SK-N-SH (cell line): ENCODE measurements at regions of chr19 and their contacts with region 1.

Region 1: GRCh38 chr19:10027158-10027693 is 13.9 kb downstream of the RDH8 start:
- DNase-seq: no peak
- H3K4me3 ChIP-seq: peak overlapping the region in 1 of 2 experiments; percentile 30; a peak in 1 of 4 replicates
- H3K27ac ChIP-seq: no peak overlapping the region
- H3K4me1 ChIP-seq: peaks cover 0 to 4% of the 10 kb centered on the region in 2 experiments; a peak in 1 of 4 replicates
- H3K27me3 ChIP-seq: peaks cover 63% of the 10 kb centered on the region
- CTCF ChIP-seq: no peak
- EP300 ChIP-seq: no peak
- RAD21 ChIP-seq: no peak

Region 2: GRCh38 chr19:9934132-9934950 is 92.9 kb before region 1 on chr19:
- CTCF ChIA-PET with region 1: interaction called, 142 read pairs
- POLR2A ChIA-PET with region 1: no interaction called
- DNase-seq: peak; percentile 92
- H3K4me3 ChIP-seq: peak overlapping the region in 1 of 2 experiments; percentile 30; a peak in 2 of 4 replicates
- H3K27ac ChIP-seq: no peak overlapping the region
- H3K4me1 ChIP-seq: peaks cover 5 to 17% of the 10 kb centered on the region in 2 experiments; a peak in 3 of 4 replicates
- H3K27me3 ChIP-seq: peaks cover 23% of the 10 kb centered on the region; the same call in 1 of the 2 replicates
- CTCF ChIP-seq: peak; percentile 95
- EP300 ChIP-seq: no peak
- RAD21 ChIP-seq: peak; percentile 86

Region 3: DNA sequence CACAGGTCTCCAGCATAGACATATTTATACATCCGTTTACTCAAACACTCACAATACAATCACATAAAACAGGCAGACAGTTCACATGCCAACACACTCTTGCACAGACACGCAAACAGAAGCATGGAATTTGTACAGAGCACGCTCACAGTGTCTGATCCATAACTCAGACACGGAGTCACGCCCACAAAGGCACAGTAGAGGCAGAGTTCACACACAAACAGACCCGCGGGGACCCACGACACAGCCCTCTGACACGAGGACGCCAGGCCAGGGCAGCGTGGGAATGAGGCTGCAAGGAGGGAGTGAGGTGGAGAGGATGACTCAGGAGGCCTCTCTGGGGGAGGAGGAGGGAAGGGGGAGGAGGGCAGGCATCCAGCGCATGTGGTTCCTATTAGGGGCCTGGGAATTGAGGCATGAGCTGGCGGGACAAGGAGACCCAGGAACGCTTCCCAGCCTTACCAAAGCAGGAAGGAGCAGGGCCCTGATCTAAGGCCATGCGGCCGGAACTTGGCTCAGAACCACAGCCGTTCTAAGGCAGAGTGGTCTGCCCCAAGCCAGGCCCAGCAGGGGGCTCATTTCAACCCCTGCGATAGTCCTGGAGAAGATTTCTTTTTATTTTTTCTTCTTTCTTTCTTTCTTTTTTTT is 81.8 kb before region 1 on chr19:
- CTCF ChIA-PET with region 1: interaction called, 10 read pairs
- POLR2A ChIA-PET with region 1: no interaction called
- DNase-seq: peak; percentile 78
- H3K4me3 ChIP-seq: no peak overlapping the region
- H3K27ac ChIP-seq: peak overlapping the region; percentile 22 to 98
- H3K4me1 ChIP-seq: peaks cover 8 to 10% of the 10 kb centered on the region in 2 experiments; a peak in 2 of 4 replicates
- H3K27me3 ChIP-seq: no peaks in the 10 kb centered on the region
- CTCF ChIP-seq: peak; percentile 53
- EP300 ChIP-seq: peak; percentile 53 to 73; a peak in 3 of 4 replicates
- RAD21 ChIP-seq: no peak

Region 4: DNA sequence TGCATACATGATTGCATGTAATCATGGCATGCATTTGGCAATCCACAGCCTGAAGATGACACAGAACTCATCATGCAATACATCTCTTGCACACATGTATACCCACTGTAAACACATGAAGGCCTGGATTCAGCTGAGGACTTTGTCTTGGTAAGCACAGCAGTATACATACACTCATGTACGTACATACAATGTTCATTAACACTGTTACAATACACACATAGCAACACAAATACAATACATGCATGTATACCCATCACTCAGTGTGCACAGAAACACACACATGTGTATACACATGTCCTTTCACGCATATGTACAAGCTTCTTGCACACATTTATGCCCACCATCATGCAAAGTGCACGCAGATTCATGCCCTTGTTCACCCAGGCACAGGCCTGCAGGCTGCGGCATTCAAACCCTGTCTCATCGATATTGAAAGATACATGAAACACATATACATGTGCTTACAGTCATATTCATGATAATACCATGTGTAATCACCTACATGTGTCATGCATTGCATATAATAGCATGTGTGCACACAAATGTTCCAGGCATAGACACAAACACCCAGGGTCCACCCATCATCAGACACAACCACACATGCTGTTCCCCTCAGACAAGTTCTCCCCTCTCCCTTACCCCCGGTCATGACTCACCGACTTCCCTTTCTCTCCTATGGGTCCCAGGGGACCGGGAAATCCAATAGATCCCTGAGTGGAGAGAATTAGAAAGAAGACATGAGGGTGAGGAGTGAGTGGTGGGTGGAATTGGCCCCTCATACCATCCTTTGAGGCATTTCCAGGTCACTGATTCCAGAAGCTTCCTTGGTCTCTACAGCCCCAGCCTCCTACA is 45.6 kb before region 1 on chr19:
- CTCF ChIA-PET with region 1: interaction called, 10 read pairs
- POLR2A ChIA-PET with region 1: no interaction called
- DNase-seq: no peak
- H3K4me3 ChIP-seq: no peak overlapping the region
- H3K27ac ChIP-seq: no peak overlapping the region
- H3K4me1 ChIP-seq: no peaks in the 10 kb centered on the region
- H3K27me3 ChIP-seq: peaks cover 23% of the 10 kb centered on the region
- CTCF ChIP-seq: no peak
- EP300 ChIP-seq: no peak
- RAD21 ChIP-seq: no peak

Region 5: GRCh38 chr19:10010247-10010691 is 17.0 kb before region 1 on chr19 and contains the start of gene COL5A3:
- CTCF ChIA-PET with region 1: interaction called, 27 read pairs
- POLR2A ChIA-PET with region 1: no interaction called
- DNase-seq: peak; percentile 51
- H3K4me3 ChIP-seq: no peak within 1 kb of the TSS
- H3K27ac ChIP-seq: no peak within 1 kb of the TSS
- H3K4me1 ChIP-seq: no peaks in the 10 kb centered on the region
- H3K27me3 ChIP-seq: peaks cover 53% of the 10 kb centered on the region
- CTCF ChIP-seq: no peak
- EP300 ChIP-seq: no peak
- RAD21 ChIP-seq: no peak
- polyA plus RNA-seq, gene COL5A3: under 0.01 and 0.02 TPM in 2 replicates

Region 6: GRCh38 chr19:10279737-10280442 is 252.7 kb after region 1 on chr19:
- CTCF ChIA-PET with region 1: no interaction called
- POLR2A ChIA-PET with region 1: no interaction called
- DNase-seq: no peak
- H3K4me3 ChIP-seq: no peak overlapping the region
- H3K27ac ChIP-seq: no peak overlapping the region
- H3K4me1 ChIP-seq: no peaks in the 10 kb centered on the region
- H3K27me3 ChIP-seq: no peaks in the 10 kb centered on the region
- CTCF ChIP-seq: no peak
- EP300 ChIP-seq: no peak
- RAD21 ChIP-seq: no peak